Mammary epithelial cell (primary cell): ENCODE measurements at regions of chrX and their contacts with region 1.

Region 1: GRCh38 chrX:133171962-133172708 is 46.0 kb downstream of the TFDP3 start:
- DNase-seq: peak; percentile 20
- H3K4me3 ChIP-seq: no peak overlapping the region
- H3K27ac ChIP-seq: no peak overlapping the region
- H3K4me1 ChIP-seq: no peaks in the 10 kb centered on the region
- H3K27me3 ChIP-seq: no peaks in the 10 kb centered on the region
- CTCF ChIP-seq: peak; percentile 63 to 64

Region 2: DNA sequence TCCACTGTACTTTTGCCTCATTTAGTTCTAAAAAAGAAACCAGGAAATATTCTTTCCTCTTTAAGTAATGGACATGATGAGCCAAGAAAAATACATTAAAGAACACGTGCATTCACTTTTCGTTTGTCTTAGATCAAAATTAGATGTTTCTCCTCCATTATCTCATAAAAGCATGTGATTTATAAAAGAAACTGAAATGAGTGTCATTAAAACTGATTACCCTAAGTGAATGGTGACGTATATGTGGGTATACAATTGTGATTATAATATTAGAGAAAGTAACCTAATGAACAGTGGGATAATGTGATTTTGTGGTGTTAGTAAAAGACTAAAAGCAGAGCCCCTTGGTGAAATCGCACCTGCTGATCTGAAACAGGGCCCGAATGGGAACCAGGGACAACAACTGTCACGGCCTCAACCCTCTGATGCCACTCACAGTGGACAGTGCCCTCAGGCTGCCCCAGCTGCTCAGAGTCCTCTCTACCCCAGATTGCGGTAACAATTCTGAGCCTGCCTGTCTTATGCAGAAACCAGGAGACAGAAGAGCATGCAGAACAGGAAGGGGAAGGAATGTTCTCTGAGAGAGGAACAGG is 188.0 kb before region 1 on chrX:
- CTCF ChIA-PET with region 1: no interaction called
- dilution Hi-C with region 1: no loop called
- in situ Hi-C with region 1: no loop called
- intact Hi-C with region 1: loop called (anchors 5 kb)
- DNase-seq: no peak
- H3K4me3 ChIP-seq: no peak overlapping the region
- H3K27ac ChIP-seq: no peak overlapping the region
- H3K4me1 ChIP-seq: no peaks in the 10 kb centered on the region
- H3K27me3 ChIP-seq: peaks cover 2% of the 10 kb centered on the region
- CTCF ChIP-seq: no peak

Region 3: GRCh38 chrX:133045986-133046385 is 126.1 kb before region 1 on chrX:
- CTCF ChIA-PET with region 1: no interaction called
- dilution Hi-C with region 1: no loop called
- in situ Hi-C with region 1: loop called (anchors 10 kb)
- intact Hi-C with region 1: loop called (anchors 1 kb)
- DNase-seq: peak; percentile 9
- H3K4me3 ChIP-seq: no peak overlapping the region
- H3K27ac ChIP-seq: no peak overlapping the region
- H3K4me1 ChIP-seq: no peaks in the 10 kb centered on the region
- H3K27me3 ChIP-seq: peaks cover 1% of the 10 kb centered on the region
- CTCF ChIP-seq: peak; percentile 32 to 59

Region 4: GRCh38 chrX:133081990-133082389 is 90.1 kb before region 1 on chrX:
- CTCF ChIA-PET with region 1: no interaction called
- dilution Hi-C with region 1: no loop called
- in situ Hi-C with region 1: no loop called
- intact Hi-C with region 1: no loop called
- DNase-seq: no peak
- H3K4me3 ChIP-seq: no peak overlapping the region
- H3K27ac ChIP-seq: no peak overlapping the region
- H3K4me1 ChIP-seq: peaks cover 4% of the 10 kb centered on the region
- H3K27me3 ChIP-seq: no peaks in the 10 kb centered on the region
- CTCF ChIP-seq: no peak

Region 5: DNA sequence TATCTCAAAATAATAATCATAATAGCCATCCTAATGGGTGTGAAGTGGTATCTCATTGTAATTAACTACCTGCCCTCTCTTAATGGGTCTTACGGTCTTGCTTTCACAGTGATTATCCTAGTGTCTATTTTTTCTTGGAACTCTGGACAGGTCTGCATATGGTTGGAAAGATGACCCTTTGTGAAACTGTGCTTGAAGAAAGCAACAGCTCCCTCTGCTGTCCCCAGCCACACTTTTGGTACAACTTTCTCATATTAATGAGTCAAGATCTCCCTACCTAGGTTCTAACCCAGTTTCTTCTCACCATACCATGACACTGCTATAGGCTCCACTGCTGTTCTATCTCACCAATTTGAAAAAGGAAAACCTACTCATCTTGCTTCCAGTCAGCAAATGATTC is 43.6 kb after region 1 on chrX:
- CTCF ChIA-PET with region 1: no interaction called
- dilution Hi-C with region 1: no loop called
- in situ Hi-C with region 1: no loop called
- intact Hi-C with region 1: loop called (anchors 1 kb)
- DNase-seq: peak; percentile 19
- H3K4me3 ChIP-seq: no peak overlapping the region
- H3K27ac ChIP-seq: no peak overlapping the region
- H3K4me1 ChIP-seq: no peaks in the 10 kb centered on the region
- H3K27me3 ChIP-seq: no peaks in the 10 kb centered on the region
- CTCF ChIP-seq: peak; percentile 37 to 63